ENCODE measurements at regions of chr2 and their contacts with region 1.

Region 1: GRCh38 chr2:152025678-152026287 is 73.1 kb downstream of the CACNB4 start:
- DNase-seq: peak; percentile 90
- ATAC-seq: peak; percentile 94
- H3K4me3 Mint-ChIP-seq: peak overlapping the region; percentile 66
- H3K27ac Mint-ChIP-seq: peak overlapping the region; percentile 68
- H3K4me1 Mint-ChIP-seq: peaks cover 5% of the 10 kb centered on the region
- H3K27me3 Mint-ChIP-seq: peaks cover 3% of the 10 kb centered on the region

Region 2: DNA sequence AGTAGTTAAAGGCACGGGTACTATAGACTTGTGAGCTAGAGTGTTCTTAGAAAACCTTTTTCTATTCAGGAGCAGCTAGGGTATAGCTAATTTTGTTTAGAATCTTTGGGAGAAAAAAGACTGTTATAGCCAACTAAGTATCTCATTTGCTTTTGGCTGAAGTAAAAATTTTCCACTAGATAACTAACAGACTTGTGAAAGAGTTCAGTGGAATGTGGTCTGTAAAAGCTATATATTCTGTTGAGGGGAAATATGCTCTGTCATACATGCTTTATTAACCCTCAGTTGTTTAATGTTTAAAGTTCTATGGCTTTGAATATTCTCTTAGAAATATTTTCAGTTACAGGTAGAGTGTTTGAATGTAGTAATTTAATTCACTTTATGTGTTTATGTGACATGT is 566.4 kb before region 1 on chr2:
- CTCF ChIA-PET with region 1: no interaction called
- POLR2A ChIA-PET with region 1: no interaction called
- intact Hi-C with region 1: loop called in 1 of 2 experiments (anchors 10 kb)
- DNase-seq: no peak
- ATAC-seq: no peak
- H3K4me3 Mint-ChIP-seq: no peak overlapping the region
- H3K27ac Mint-ChIP-seq: no peak overlapping the region
- H3K4me1 Mint-ChIP-seq: no peaks in the 10 kb centered on the region
- H3K27me3 Mint-ChIP-seq: no peaks in the 10 kb centered on the region

Region 3: GRCh38 chr2:151575338-151575737 is 450.4 kb before region 1 on chr2:
- CTCF ChIA-PET with region 1: interaction called, 5 read pairs
- POLR2A ChIA-PET with region 1: no interaction called
- intact Hi-C with region 1: loop called in 1 of 2 experiments (anchors 10 kb)
- DNase-seq: no peak
- ATAC-seq: no peak
- H3K4me3 Mint-ChIP-seq: no peak overlapping the region
- H3K27ac Mint-ChIP-seq: no peak overlapping the region
- H3K4me1 Mint-ChIP-seq: no peaks in the 10 kb centered on the region
- H3K27me3 Mint-ChIP-seq: no peaks in the 10 kb centered on the region

Region 4: DNA sequence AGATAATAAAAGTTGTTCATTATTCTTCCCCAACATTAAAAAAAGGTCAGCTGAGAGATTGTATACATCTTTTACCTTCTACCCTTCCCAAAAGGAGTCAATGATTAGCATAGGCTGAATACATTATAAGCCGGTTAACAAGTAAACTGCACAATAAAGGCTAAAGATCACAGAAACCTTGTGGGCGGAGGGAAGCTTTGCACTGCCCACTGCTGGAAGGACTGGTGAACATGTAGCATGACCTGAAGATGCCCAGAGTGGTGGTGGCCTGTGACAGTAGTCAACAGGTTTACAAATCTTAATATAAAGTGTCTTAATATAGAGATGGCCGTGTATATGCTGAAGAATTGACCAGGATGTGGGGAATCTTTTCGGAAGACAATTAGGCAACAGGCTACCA is 233.2 kb before region 1 on chr2:
- CTCF ChIA-PET with region 1: no interaction called
- POLR2A ChIA-PET with region 1: no interaction called
- intact Hi-C with region 1: no loop called
- DNase-seq: no peak
- ATAC-seq: no peak
- H3K4me3 Mint-ChIP-seq: no peak overlapping the region
- H3K27ac Mint-ChIP-seq: no peak overlapping the region
- H3K4me1 Mint-ChIP-seq: no peaks in the 10 kb centered on the region
- H3K27me3 Mint-ChIP-seq: no peaks in the 10 kb centered on the region

Region 5: DNA sequence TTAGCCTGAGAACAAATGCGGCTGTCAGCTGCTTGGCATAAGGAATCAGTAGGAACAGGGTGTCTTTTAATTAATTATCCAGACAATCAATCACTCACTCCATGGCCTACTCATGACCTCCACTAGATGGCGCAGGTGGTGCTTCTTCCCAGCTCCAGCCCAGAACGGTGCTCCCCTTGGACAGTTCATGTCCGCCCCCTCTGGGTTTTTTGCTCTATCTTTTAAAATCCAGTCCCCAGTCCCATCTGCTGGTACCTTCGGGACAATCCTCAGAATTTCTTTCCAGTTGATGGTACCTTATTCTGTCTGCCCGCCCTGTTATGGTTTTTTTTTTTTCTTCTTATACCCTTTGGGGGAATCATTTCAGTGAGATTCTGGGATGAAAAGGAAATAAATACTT is 26.7 kb before region 1 on chr2:
- CTCF ChIA-PET with region 1: interaction called, 36 read pairs
- POLR2A ChIA-PET with region 1: no interaction called
- intact Hi-C with region 1: loop called (anchors 1 kb)
- DNase-seq: peak; percentile 67
- ATAC-seq: peak; percentile 80
- H3K4me3 Mint-ChIP-seq: no peak overlapping the region
- H3K27ac Mint-ChIP-seq: no peak overlapping the region
- H3K4me1 Mint-ChIP-seq: no peaks in the 10 kb centered on the region
- H3K27me3 Mint-ChIP-seq: no peaks in the 10 kb centered on the region

Region 6: GRCh38 chr2:152012697-152013096 is 13.1 kb before region 1 on chr2:
- CTCF ChIA-PET with region 1: interaction called, 40 read pairs
- POLR2A ChIA-PET with region 1: no interaction called
- intact Hi-C with region 1: no loop called
- DNase-seq: no peak
- ATAC-seq: no peak
- H3K4me3 Mint-ChIP-seq: no peak overlapping the region
- H3K27ac Mint-ChIP-seq: no peak overlapping the region
- H3K4me1 Mint-ChIP-seq: no peaks in the 10 kb centered on the region
- H3K27me3 Mint-ChIP-seq: peaks cover 3% of the 10 kb centered on the region

Region 7: DNA sequence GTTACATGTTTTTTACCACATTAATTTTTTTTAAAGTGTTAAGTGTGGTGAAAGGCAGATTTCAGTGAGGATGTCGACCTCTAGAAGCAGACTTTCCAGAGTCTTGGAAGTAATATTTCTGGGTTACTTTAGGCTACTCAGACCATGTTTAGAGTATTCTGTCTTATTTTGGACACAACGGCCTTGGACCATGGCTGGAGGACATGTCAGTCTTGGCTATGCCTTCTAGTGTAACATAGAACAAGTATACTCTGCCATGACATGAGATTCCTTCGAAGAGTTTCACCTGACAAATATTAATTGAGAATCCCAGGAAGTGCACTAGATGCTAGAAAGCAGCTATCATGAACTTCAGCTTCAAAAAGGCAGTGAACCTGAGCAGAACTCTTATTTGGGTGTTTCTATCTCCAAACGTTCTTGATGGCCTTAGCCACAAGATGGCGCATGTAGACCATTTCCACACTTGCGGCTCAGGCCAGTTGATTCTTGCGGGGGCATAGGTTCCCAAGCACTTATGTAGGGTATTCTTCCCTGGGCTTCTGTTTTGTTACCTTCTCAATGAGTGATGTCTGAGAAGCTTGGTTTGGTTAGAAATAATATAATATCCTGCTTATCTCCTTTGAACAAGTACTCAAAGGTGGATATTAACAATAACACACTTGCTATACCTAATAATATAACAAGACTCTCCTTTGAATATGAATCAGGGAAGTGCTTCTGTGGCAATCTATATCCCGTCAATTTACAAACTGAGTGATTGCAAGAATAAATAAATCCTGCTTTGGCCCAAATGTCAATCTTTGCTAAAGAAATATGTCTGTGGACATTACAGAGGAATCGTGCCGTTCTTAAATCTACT is 11.1 kb after region 1 on chr2:
- CTCF ChIA-PET with region 1: interaction called, 34 read pairs
- POLR2A ChIA-PET with region 1: no interaction called
- intact Hi-C with region 1: no loop called
- DNase-seq: peak; percentile 77
- ATAC-seq: peak; percentile 42
- H3K4me3 Mint-ChIP-seq: no peak overlapping the region
- H3K27ac Mint-ChIP-seq: no peak overlapping the region
- H3K4me1 Mint-ChIP-seq: no peaks in the 10 kb centered on the region
- H3K27me3 Mint-ChIP-seq: peaks cover 2% of the 10 kb centered on the region

Region 8: GRCh38 chr2:152046940-152047339 is 21.2 kb after region 1 on chr2:
- CTCF ChIA-PET with region 1: interaction called, 20 read pairs
- POLR2A ChIA-PET with region 1: no interaction called
- intact Hi-C with region 1: no loop called
- DNase-seq: no peak
- ATAC-seq: no peak
- H3K4me3 Mint-ChIP-seq: no peak overlapping the region
- H3K27ac Mint-ChIP-seq: no peak overlapping the region
- H3K4me1 Mint-ChIP-seq: no peaks in the 10 kb centered on the region
- H3K27me3 Mint-ChIP-seq: peaks cover 3% of the 10 kb centered on the region